HepG2 (cell line): ENCODE measurements at regions of chr3 and their contacts with region 1.

Region 1: DNA sequence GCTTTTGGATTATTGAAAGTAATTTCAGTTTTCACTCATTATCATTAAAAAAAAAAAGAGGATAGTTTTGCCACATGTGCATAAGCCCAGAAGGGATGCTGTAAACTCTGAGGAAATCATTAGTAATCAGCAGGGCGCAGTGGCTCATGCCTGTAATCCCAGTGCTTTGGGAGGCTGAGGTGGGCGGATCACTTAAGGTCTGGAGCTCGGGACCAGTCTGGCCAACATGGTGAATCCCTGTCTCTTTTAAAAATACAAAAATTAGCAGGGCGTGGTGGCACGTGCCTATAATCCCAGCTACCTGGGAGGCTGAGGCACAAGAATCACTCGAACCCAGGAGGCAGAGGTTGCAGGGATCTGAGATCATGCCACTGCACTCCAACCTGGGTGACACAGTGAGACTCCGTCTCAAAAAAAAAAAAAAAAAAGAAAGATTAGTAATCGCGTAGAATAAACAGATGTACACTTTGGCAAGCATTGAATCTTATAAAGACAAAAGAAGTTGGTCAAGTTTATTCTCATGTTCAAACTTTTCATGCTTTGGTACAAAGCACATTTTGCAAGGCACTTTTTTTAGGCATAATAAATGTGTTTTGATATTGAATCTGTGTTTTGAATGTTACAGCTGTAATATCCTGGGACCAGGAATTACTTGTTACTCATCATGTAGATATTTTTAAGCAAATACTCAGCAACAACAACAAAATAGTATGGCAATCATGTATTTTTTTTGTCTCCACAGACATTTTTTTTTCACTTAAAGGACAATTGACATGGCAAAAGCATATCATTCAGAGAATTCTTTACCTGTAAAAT is 93.2 kb upstream of the AGTR1 start:
- DNase-seq: no peak
- ATAC-seq: no peak
- H3K4me3 ChIP-seq: no peak overlapping the region
- H3K27ac ChIP-seq: peak overlapping the region; percentile 100
- H3K4me1 ChIP-seq: peaks cover 74% of the 10 kb centered on the region
- H3K27me3 ChIP-seq: no peaks in the 10 kb centered on the region
- CTCF ChIP-seq: no peak
- EP300 ChIP-seq: no peak
- POLR2A ChIP-seq: no peak
- RAD21 ChIP-seq: no peak

Region 2: DNA sequence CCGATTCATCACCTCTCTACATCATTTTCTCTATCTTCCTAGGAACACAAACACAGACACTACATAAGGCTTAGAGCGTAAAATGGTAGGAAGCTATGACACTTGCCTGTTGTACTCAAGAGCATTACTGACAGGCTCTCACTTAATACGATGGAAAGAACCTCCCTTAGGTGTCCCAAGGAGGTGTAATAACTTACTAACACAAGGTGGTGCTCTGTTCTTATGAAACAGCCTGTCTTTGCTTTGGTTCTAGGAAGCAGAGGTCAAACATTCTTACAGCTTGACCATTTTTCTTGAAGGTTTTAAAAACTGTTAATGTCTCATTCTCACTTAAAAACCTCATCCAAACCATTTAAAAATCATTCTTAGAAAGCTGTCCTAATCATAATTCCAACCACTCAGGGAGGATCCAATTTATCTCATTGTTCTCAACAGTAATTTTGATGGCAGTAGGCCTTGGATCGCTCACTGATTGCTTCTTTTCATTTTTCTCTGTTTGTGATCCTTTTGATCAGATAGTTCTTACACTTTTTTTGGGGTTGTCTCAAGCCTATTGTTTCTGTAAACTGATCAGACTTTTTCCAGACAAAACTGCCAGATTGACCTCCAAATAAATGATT is 224.6 kb before region 1 on chr3:
- CTCF ChIA-PET with region 1: no interaction called
- POLR2A ChIA-PET with region 1: interaction called, 9 read pairs
- in situ Hi-C with region 1: no loop called
- intact Hi-C with region 1: loop called (anchors 1 kb)
- DNase-seq: peak; percentile 71
- ATAC-seq: peak; percentile 98
- H3K4me3 ChIP-seq: no peak overlapping the region
- H3K27ac ChIP-seq: no peak overlapping the region
- H3K4me1 ChIP-seq: no peaks in the 10 kb centered on the region
- H3K27me3 ChIP-seq: no peaks in the 10 kb centered on the region
- CTCF ChIP-seq: peak; percentile 86
- EP300 ChIP-seq: peak in 1 of 2 experiments; percentile 15; a peak in 1 of 4 replicates
- POLR2A ChIP-seq: no peak
- RAD21 ChIP-seq: peak; percentile 73

Region 3: DNA sequence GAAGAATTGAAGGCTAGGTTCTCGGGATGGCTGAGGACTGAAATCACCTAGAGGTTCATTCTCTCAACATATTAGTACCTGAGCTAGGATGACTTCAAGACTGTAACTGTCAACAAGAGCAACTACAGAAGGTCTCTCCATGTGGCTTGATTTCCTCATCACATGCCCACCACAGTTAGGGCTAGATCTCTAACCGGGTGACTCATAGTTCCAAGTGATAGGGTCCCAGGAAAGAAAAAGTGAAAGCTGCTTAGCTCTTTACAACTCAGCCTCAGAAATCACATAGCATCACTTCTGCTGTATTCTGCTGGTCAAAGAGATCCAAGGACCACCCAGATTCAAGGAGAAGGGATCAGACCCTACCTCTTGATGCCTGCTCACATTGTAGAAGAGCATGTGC is 72.2 kb before region 1 on chr3:
- CTCF ChIA-PET with region 1: no interaction called
- POLR2A ChIA-PET with region 1: interaction called, 72 read pairs
- in situ Hi-C with region 1: no loop called
- intact Hi-C with region 1: loop called (anchors 1 kb)
- DNase-seq: no peak
- ATAC-seq: no peak
- H3K4me3 ChIP-seq: no peak overlapping the region
- H3K27ac ChIP-seq: no peak overlapping the region
- H3K4me1 ChIP-seq: peaks cover 24% of the 10 kb centered on the region
- H3K27me3 ChIP-seq: no peaks in the 10 kb centered on the region
- CTCF ChIP-seq: no peak
- EP300 ChIP-seq: no peak
- POLR2A ChIP-seq: no peak
- RAD21 ChIP-seq: no peak

Region 4: GRCh38 chr3:148615385-148615784 is 10.9 kb after region 1 on chr3:
- CTCF ChIA-PET with region 1: no interaction called
- POLR2A ChIA-PET with region 1: interaction called, 18 read pairs
- in situ Hi-C with region 1: no loop called
- intact Hi-C with region 1: no loop called
- DNase-seq: no peak
- ATAC-seq: no peak
- H3K4me3 ChIP-seq: no peak overlapping the region
- H3K27ac ChIP-seq: no peak overlapping the region
- H3K4me1 ChIP-seq: peaks cover 11% of the 10 kb centered on the region
- H3K27me3 ChIP-seq: no peaks in the 10 kb centered on the region
- CTCF ChIP-seq: no peak
- EP300 ChIP-seq: no peak
- POLR2A ChIP-seq: no peak
- RAD21 ChIP-seq: no peak

Region 5: GRCh38 chr3:148631124-148631903 is 26.8 kb after region 1 on chr3:
- CTCF ChIA-PET with region 1: no interaction called
- POLR2A ChIA-PET with region 1: interaction called, 6 read pairs
- in situ Hi-C with region 1: no loop called
- intact Hi-C with region 1: loop called (anchors 2 kb)
- DNase-seq: peak; percentile 61
- ATAC-seq: peak; percentile 91
- H3K4me3 ChIP-seq: no peak overlapping the region
- H3K27ac ChIP-seq: peak overlapping the region; percentile 35
- H3K4me1 ChIP-seq: peaks cover 11% of the 10 kb centered on the region
- H3K27me3 ChIP-seq: no peaks in the 10 kb centered on the region
- CTCF ChIP-seq: peak; percentile 80
- EP300 ChIP-seq: no peak
- POLR2A ChIP-seq: no peak
- RAD21 ChIP-seq: peak; percentile 88

Region 6: GRCh38 chr3:148718982-148719862 is 114.7 kb after region 1 on chr3:
- CTCF ChIA-PET with region 1: no interaction called
- POLR2A ChIA-PET with region 1: interaction called, 12 read pairs
- in situ Hi-C with region 1: no loop called
- intact Hi-C with region 1: no loop called
- DNase-seq: no peak
- ATAC-seq: peak; percentile 45; the same call in 1 of the 3 replicates
- H3K4me3 ChIP-seq: no peak overlapping the region
- H3K27ac ChIP-seq: no peak overlapping the region
- H3K4me1 ChIP-seq: peaks cover 30% of the 10 kb centered on the region
- H3K27me3 ChIP-seq: no peaks in the 10 kb centered on the region; a peak in 1 of 5 replicates
- CTCF ChIP-seq: peak; percentile 52
- EP300 ChIP-seq: no peak
- POLR2A ChIP-seq: no peak
- RAD21 ChIP-seq: peak; percentile 48; the same call in 1 of the 2 replicates